ENCODE measurements at regions of chr19 and their contacts with region 1.

Region 1: GRCh38 chr19:7799640-7800355 is 30.2 kb upstream of the EVI5L start:
- DNase-seq: peak; percentile 94
- ATAC-seq: peak; percentile 68
- H3K4me3 ChIP-seq: peak overlapping the region; percentile 68
- H3K27ac ChIP-seq: no peak overlapping the region
- H3K4me1 ChIP-seq: peaks cover 34% of the 10 kb centered on the region
- H3K27me3 ChIP-seq: no peaks in the 10 kb centered on the region
- CTCF ChIP-seq: peak; percentile 83

Region 2: DNA sequence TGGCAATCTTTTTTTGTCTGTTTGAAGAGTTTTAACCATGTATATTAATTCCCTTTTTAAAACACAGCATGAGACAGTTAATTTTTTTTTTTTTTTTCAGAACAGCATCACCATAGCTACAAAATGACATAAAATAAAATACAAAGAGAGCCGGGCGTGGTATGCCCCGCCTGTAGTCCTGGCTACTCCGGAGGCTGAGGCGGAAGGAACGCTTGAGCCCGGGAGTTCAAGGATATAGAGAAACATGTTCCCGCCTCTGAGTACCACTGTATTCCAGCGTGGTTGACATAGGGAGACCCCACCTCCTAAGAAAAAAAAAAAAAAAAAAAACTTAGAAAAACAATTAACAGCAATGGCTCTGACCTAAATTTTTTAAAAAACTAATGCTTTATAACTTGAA is 495.6 kb before region 1 on chr19:
- CTCF ChIA-PET with region 1: no interaction called
- POLR2A ChIA-PET with region 1: no interaction called
- intact Hi-C with region 1: no loop called
- DNase-seq: no peak
- ATAC-seq: no peak
- H3K4me3 ChIP-seq: no peak overlapping the region
- H3K27ac ChIP-seq: no peak overlapping the region
- H3K4me1 ChIP-seq: no peaks in the 10 kb centered on the region
- H3K27me3 ChIP-seq: no peaks in the 10 kb centered on the region
- CTCF ChIP-seq: no peak

Region 3: DNA sequence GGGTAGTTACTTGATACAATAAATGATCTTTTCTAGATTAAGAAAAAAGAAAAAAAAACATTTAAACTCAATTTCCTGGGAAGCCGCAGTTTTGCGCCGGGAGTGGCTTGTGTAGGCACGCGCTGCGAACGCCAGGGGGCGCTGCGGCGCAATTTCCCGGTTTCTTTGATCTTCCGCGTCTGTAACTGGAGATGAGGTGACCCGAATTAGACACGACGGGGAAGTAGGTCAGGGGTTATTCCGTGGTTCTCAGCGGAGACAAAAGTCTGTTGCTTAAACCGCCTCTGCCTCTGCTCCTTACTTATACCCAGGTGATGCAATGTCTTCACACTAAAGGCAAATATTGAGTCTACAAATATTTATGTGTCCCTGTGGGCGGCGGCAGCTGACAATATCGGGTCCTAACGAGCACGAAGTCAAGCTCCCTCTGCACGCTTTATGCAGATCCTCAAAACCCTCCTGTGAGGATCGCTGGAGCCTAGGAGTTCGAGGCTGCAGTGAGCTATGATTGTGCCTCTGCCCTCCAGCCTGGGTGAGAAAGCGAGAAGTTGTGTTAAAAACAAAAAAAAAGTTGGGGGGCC is 147.6 kb before region 1 on chr19:
- CTCF ChIA-PET with region 1: interaction called, 3 read pairs
- POLR2A ChIA-PET with region 1: no interaction called
- intact Hi-C with region 1: loop called (anchors 1 kb)
- DNase-seq: peak; percentile 95
- ATAC-seq: peak; percentile 78
- H3K4me3 ChIP-seq: peak overlapping the region; percentile 23; the same call in 1 of the 2 replicates
- H3K27ac ChIP-seq: no peak overlapping the region
- H3K4me1 ChIP-seq: peaks cover 3% of the 10 kb centered on the region; the same call in 1 of the 2 replicates
- H3K27me3 ChIP-seq: no peaks in the 10 kb centered on the region
- CTCF ChIP-seq: peak; percentile 97

Region 4: GRCh38 chr19:7680606-7681339 is 119.0 kb before region 1 on chr19 and contains the start of gene TRAPPC5:
- CTCF ChIA-PET with region 1: interaction called, 8 read pairs
- POLR2A ChIA-PET with region 1: interaction called, 15 read pairs
- intact Hi-C with region 1: loop called (anchors 1 kb)
- DNase-seq: peak; percentile 93
- ATAC-seq: peak; percentile 81
- H3K4me3 ChIP-seq: peak within 1 kb of the TSS; percentile 97
- H3K27ac ChIP-seq: peak within 1 kb of the TSS; percentile 23; the same call in 1 of the 2 replicates
- H3K4me1 ChIP-seq: peaks cover 25% of the 10 kb centered on the region; the same call in 1 of the 2 replicates
- H3K27me3 ChIP-seq: no peaks in the 10 kb centered on the region
- CTCF ChIP-seq: peak; percentile 95
- total RNA-seq, gene TRAPPC5: 317 and 376 TPM in 2 replicates

Region 5: GRCh38 chr19:7692417-7693088 is 107.2 kb before region 1 on chr19:
- CTCF ChIA-PET with region 1: no interaction called
- POLR2A ChIA-PET with region 1: no interaction called
- intact Hi-C with region 1: no loop called
- DNase-seq: no peak
- ATAC-seq: no peak
- H3K4me3 ChIP-seq: no peak overlapping the region
- H3K27ac ChIP-seq: no peak overlapping the region
- H3K4me1 ChIP-seq: no peaks in the 10 kb centered on the region
- H3K27me3 ChIP-seq: peaks cover 15% of the 10 kb centered on the region
- CTCF ChIP-seq: no peak

Region 6: GRCh38 chr19:7748770-7749209 is 51.0 kb before region 1 on chr19:
- CTCF ChIA-PET with region 1: interaction called, 6 read pairs
- POLR2A ChIA-PET with region 1: no interaction called
- intact Hi-C with region 1: loop called (anchors 1 kb)
- DNase-seq: peak; percentile 82
- ATAC-seq: peak; percentile 86
- H3K4me3 ChIP-seq: no peak overlapping the region
- H3K27ac ChIP-seq: no peak overlapping the region
- H3K4me1 ChIP-seq: no peaks in the 10 kb centered on the region
- H3K27me3 ChIP-seq: peaks cover 11% of the 10 kb centered on the region
- CTCF ChIP-seq: peak; percentile 77

Region 7: DNA sequence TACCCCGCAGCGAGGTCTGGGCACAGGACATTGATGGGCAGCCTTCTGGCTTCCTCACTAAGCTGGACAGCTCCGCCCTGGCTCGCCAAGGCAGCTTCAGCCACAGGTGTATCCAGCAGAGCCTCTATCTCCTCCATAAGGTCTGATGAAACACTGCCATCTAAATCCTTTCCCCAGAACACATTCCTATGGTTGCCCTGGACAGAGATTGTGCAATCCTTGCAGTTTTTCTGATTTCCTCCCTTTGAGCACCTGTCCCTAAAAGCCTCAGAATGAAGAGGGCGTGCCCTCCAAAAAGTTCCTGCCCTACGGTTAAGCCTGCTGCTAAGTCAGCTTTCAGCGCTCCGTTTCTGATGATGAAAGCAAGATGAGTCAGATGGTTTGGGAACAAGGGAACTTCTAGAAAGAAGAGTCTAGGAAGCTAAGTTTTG is 15.8 kb before region 1 on chr19:
- CTCF ChIA-PET with region 1: interaction called, 13 read pairs
- POLR2A ChIA-PET with region 1: no interaction called
- intact Hi-C with region 1: loop called (anchors 1 kb)
- DNase-seq: peak; percentile 97
- ATAC-seq: peak; percentile 73
- H3K4me3 ChIP-seq: no peak overlapping the region
- H3K27ac ChIP-seq: no peak overlapping the region
- H3K4me1 ChIP-seq: peaks cover 10% of the 10 kb centered on the region
- H3K27me3 ChIP-seq: peaks cover 22% of the 10 kb centered on the region; the same call in 1 of the 2 replicates
- CTCF ChIP-seq: no peak

Region 8: GRCh38 chr19:7815325-7815724 is 15.5 kb after region 1 on chr19:
- CTCF ChIA-PET with region 1: no interaction called
- POLR2A ChIA-PET with region 1: no interaction called
- intact Hi-C with region 1: no loop called
- DNase-seq: no peak
- ATAC-seq: no peak
- H3K4me3 ChIP-seq: no peak overlapping the region
- H3K27ac ChIP-seq: no peak overlapping the region
- H3K4me1 ChIP-seq: no peaks in the 10 kb centered on the region
- H3K27me3 ChIP-seq: no peaks in the 10 kb centered on the region
- CTCF ChIP-seq: no peak

Region 9: GRCh38 chr19:7829561-7830271 is 29.9 kb after region 1 on chr19 and contains the start of gene EVI5L:
- CTCF ChIA-PET with region 1: interaction called, 12 read pairs
- POLR2A ChIA-PET with region 1: interaction called, 10 read pairs
- intact Hi-C with region 1: no loop called
- DNase-seq: peak; percentile 100
- ATAC-seq: peak; percentile 81
- H3K4me3 ChIP-seq: peak within 1 kb of the TSS; percentile 70
- H3K27ac ChIP-seq: no peak within 1 kb of the TSS
- H3K4me1 ChIP-seq: peaks cover 42% of the 10 kb centered on the region
- H3K27me3 ChIP-seq: no peaks in the 10 kb centered on the region
- CTCF ChIP-seq: no peak
- total RNA-seq, gene EVI5L: 29.5 and 42.4 TPM in 2 replicates

Region 10: DNA sequence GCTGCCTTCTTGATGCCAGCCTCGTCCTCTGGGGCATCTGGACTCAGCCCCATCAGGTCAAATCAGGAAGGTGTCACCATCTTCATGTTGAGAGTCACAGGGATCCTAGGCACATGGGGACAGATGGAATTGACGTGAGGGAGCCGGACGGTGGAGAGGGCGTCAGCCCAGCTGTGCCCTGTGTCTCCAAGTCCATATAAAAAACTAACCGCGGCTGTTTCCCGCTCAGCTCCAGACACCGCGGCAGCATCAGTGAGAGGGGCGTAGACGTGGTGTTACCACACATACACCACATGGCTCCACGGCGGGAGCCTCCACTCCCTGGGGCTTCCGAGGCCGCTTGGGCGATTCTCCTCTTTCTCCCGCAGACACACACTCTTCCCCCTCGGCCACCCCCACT is 80.0 kb after region 1 on chr19:
- CTCF ChIA-PET with region 1: no interaction called
- POLR2A ChIA-PET with region 1: no interaction called
- intact Hi-C with region 1: no loop called
- DNase-seq: no peak
- ATAC-seq: no peak
- H3K4me3 ChIP-seq: no peak overlapping the region
- H3K27ac ChIP-seq: no peak overlapping the region
- H3K4me1 ChIP-seq: no peaks in the 10 kb centered on the region
- H3K27me3 ChIP-seq: no peaks in the 10 kb centered on the region
- CTCF ChIP-seq: no peak

Measured in PC-3 (cell line).